ENCODE measurements at regions of chr4 and their contacts with region 1.

Region 1: DNA sequence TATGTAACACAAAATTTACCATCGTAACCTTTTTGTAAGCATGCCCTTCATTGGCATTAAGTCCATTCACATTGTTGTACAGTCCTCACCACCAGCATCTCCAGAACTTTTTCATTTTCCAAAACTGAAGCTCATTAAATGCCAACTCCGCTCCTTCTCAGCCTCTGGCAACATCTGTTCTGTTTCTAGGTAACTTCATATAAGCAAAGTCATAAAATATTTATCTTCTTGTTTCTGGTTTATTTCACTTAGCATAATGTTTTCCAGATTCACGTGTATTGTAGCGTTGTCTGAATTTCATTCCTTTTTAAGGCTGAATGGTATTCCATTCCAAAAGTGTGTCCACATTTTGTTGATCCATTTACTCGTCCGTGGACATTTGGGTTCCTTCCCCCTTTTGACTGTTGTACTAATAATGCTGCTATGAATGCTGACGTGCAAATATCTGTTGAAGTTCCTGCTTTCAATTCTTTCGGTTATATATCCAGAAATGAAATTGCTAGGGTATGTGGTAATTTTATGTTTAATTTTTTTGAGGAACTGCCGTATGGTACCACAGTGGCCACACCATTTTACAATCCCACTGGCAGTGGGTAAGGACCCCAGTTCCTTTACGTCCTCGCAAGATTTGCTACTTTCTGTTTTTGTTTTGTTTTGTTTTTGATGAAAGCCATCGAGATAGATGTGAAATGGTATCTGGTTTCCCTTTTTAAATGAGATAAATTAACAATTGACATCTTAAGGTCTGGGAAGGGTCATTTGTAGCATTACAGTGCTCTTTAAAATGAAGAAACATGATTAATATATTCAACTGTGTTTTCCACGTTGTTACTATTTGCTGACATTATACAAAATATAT is 63.4 kb downstream of the PTTG2 start:
- DNase-seq: no peak
- ATAC-seq: no peak
- H3K4me3 ChIP-seq: no peak overlapping the region
- H3K4me3 Mint-ChIP-seq: no peak overlapping the region
- H3K27ac ChIP-seq: no peak overlapping the region
- H3K27ac Mint-ChIP-seq: no peak overlapping the region
- H3K4me1 ChIP-seq: peaks cover 3 to 4% of the 10 kb centered on the region in 2 donors
- H3K4me1 Mint-ChIP-seq: peaks cover 16% of the 10 kb centered on the region
- H3K27me3 ChIP-seq: no peaks in the 10 kb centered on the region
- H3K27me3 Mint-ChIP-seq: no peaks in the 10 kb centered on the region
- CTCF ChIP-seq: no peak

Region 2: GRCh38 chr4:37994569-37994968 is 29.0 kb before region 1 on chr4:
- CTCF ChIA-PET with region 1: no interaction called
- POLR2A ChIA-PET with region 1: no interaction called
- intact Hi-C with region 1: loop called (anchors 2 kb)
- DNase-seq: peak; percentile 25
- ATAC-seq: no peak
- H3K4me3 ChIP-seq: no peak overlapping the region
- H3K4me3 Mint-ChIP-seq: peak overlapping the region; percentile 62
- H3K27ac ChIP-seq: peak overlapping the region; percentile 28 to 43
- H3K27ac Mint-ChIP-seq: peak overlapping the region; percentile 54
- H3K4me1 ChIP-seq: peaks cover 45 to 50% of the 10 kb centered on the region in 2 donors
- H3K4me1 Mint-ChIP-seq: peaks cover 63% of the 10 kb centered on the region
- H3K27me3 ChIP-seq: no peaks in the 10 kb centered on the region
- H3K27me3 Mint-ChIP-seq: no peaks in the 10 kb centered on the region
- CTCF ChIP-seq: no peak

Region 3: GRCh38 chr4:38255572-38255971 is 232.0 kb after region 1 on chr4:
- CTCF ChIA-PET with region 1: no interaction called
- POLR2A ChIA-PET with region 1: no interaction called
- intact Hi-C with region 1: no loop called
- DNase-seq: no peak
- ATAC-seq: no peak
- H3K4me3 ChIP-seq: no peak overlapping the region
- H3K4me3 Mint-ChIP-seq: no peak overlapping the region
- H3K27ac ChIP-seq: no peak overlapping the region
- H3K27ac Mint-ChIP-seq: no peak overlapping the region
- H3K4me1 ChIP-seq: no peaks in the 10 kb centered on the region
- H3K4me1 Mint-ChIP-seq: no peaks in the 10 kb centered on the region
- H3K27me3 ChIP-seq: peaks cover 0 to 3% (median 0%) of the 10 kb centered on the region in 4 experiments
- H3K27me3 Mint-ChIP-seq: peaks cover 18% of the 10 kb centered on the region
- CTCF ChIP-seq: no peak

Measured in B cell (primary cell).